Panc1 (cell line): ENCODE measurements at regions of chr11 and their contacts with region 1.

Region 1: DNA sequence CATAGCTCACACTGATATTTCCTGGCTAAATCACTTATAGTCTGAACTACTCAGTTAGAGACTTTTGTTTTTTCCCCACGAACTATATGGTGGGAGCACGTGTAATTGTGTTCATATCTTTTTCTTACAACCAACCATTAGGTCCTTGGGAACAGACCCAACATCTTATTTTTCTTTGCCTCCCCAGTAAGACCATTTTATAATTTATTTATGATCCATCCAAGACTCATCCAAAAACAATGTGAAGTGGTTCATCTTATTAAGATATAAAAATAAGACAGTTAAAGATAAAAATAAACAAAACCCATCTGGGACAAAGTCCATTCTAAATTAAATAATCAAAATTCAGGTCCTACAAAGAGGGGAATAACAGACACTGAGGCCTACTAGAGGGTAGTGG is 90.8 kb downstream of the FAM168A start:
- DNase-seq: no peak
- ATAC-seq: no peak
- H3K4me3 ChIP-seq: no peak overlapping the region
- H3K27ac ChIP-seq: no peak overlapping the region
- H3K4me1 ChIP-seq: no peaks in the 10 kb centered on the region
- H3K27me3 ChIP-seq: no peaks in the 10 kb centered on the region
- CTCF ChIP-seq: no peak

Region 2: GRCh38 chr11:73184953-73185671 is 322.0 kb before region 1 on chr11:
- CTCF ChIA-PET with region 1: no interaction called
- POLR2A ChIA-PET with region 1: no interaction called
- in situ Hi-C with region 1: no loop called
- intact Hi-C with region 1: no loop called
- DNase-seq: peak; percentile 56
- ATAC-seq: peak; percentile 93
- H3K4me3 ChIP-seq: peak overlapping the region in 1 of 2 experiments; percentile 32; a peak in 3 of 4 replicates
- H3K27ac ChIP-seq: no peak overlapping the region
- H3K4me1 ChIP-seq: peaks cover 5% of the 10 kb centered on the region; the same call in 1 of the 2 replicates
- H3K27me3 ChIP-seq: 0 out of 2 replicates have a peak, but pooled peaks cover 3% of the 10 kb centered on the region
- CTCF ChIP-seq: peak; percentile 98

Region 3: GRCh38 chr11:73439002-73439843 is 67.9 kb before region 1 on chr11:
- CTCF ChIA-PET with region 1: no interaction called
- POLR2A ChIA-PET with region 1: no interaction called
- in situ Hi-C with region 1: no loop called
- intact Hi-C with region 1: no loop called
- DNase-seq: no peak
- ATAC-seq: no peak
- H3K4me3 ChIP-seq: no peak overlapping the region
- H3K27ac ChIP-seq: no peak overlapping the region
- H3K4me1 ChIP-seq: no peaks in the 10 kb centered on the region
- H3K27me3 ChIP-seq: no peaks in the 10 kb centered on the region
- CTCF ChIP-seq: no peak

Region 4: DNA sequence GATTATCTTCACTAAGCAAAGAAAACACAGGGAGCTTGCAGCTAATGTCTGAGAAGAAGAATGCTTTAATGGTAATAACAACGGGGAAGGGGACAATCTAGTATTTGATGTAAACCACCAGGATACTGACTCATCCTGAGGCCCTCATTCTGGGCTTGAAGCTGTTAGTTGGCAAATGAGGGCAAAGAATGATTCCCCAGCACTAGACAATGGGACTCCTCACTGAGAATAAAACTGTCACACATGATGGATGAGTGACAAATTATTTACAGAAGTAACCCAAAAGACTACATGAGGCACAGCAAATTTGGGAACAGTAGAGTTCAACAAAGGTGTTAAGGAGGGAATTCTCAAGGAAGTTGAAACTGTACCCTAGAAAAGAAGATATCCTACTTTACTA is 14.5 kb after region 1 on chr11:
- CTCF ChIA-PET with region 1: no interaction called
- POLR2A ChIA-PET with region 1: interaction called, 15 read pairs
- in situ Hi-C with region 1: no loop called
- intact Hi-C with region 1: no loop called
- DNase-seq: no peak
- ATAC-seq: no peak
- H3K4me3 ChIP-seq: no peak overlapping the region
- H3K27ac ChIP-seq: no peak overlapping the region
- H3K4me1 ChIP-seq: no peaks in the 10 kb centered on the region
- H3K27me3 ChIP-seq: no peaks in the 10 kb centered on the region
- CTCF ChIP-seq: no peak

Region 5: GRCh38 chr11:74321487-74322188 is 814.6 kb after region 1 on chr11:
- CTCF ChIA-PET with region 1: no interaction called
- POLR2A ChIA-PET with region 1: no interaction called
- in situ Hi-C with region 1: no loop called
- intact Hi-C with region 1: no loop called
- DNase-seq: no peak
- ATAC-seq: peak; percentile 34; the same call in 1 of the 2 replicates
- H3K4me3 ChIP-seq: no peak overlapping the region
- H3K27ac ChIP-seq: no peak overlapping the region
- H3K4me1 ChIP-seq: no peaks in the 10 kb centered on the region
- H3K27me3 ChIP-seq: no peaks in the 10 kb centered on the region
- CTCF ChIP-seq: peak; percentile 81